ENCODE measurements at regions of chr18 and their contacts with region 1.

Region 1: DNA sequence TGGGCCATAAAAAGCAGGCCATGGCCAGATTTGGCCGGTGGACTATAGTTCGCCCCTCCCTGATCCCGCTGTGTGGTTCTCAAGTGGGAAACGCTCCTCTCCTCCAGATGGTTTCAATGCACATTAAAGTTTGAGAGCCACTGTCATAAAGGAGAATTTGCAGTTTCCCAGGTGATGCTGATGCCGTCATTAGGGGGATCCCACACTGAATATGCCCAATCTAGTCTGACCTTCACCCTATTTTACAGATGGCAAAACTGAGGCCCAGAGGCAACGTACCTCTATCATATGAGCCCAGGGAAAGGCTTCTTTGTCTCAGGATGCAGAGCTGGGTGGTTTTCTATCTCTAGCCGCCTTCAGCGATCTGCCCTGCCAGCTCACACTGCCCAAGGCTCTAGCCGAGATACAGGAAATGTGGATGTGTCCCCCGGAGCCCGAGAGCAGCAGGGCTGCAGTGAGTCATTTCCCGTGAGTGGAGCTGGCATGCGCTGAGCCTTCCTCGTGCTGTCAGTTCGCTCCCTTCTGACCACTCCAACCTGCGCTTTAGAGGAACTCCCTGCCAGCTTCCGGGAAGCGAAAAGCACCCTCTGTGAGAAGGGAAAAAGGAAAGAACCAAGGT is 116.2 kb downstream of the SMAD7 start:
- DNase-seq: peak; percentile 86
- H3K4me3 Mint-ChIP-seq: peak overlapping the region; percentile 65
- H3K27ac Mint-ChIP-seq: peak overlapping the region; percentile 85
- H3K4me1 Mint-ChIP-seq: peaks cover 54% of the 10 kb centered on the region
- H3K27me3 Mint-ChIP-seq: no peaks in the 10 kb centered on the region

Region 2: DNA sequence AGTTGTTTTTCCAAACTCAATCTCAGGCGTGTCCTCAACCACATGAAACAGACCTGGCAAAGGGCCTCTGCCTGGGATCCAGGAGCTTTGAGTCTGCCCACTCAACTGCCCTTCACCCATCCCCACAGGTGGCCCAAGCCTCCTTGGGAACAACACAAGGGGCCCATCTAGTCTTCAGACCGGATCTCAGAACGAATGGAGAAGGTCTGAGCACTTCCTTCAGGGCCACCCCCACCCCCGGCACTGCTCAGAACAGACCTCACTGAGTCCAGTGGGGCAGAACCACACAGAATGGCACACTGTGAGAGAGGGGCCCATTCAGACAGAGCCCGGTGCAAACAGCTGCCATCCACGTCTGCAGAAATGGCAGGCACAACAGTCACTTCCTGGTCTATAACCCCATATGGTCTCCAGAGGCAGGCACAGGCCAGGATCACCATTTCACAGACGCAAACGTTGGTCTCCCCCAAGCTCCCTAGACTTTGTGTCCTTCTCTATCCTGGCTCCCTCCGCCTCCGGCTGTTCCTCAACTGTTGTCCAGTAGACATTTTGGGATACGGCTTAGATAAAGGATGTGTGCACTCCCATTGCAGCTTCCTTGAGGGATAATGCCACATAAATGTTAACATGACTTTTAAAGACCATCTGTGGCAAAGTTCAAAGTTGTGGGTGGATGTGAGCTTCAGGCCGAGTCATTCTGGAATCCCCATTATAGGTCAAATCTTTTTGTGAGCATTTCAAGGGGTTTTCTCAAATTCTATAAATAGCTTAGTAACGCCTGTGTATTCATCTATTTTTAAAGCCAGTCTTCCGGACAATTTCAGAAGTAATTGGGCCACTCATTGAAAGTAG is 33.4 kb before region 1 on chr18:
- CTCF ChIA-PET with region 1: interaction called, 3 read pairs
- intact Hi-C with region 1: loop called (anchors 1 kb)
- DNase-seq: peak; percentile 37
- H3K4me3 Mint-ChIP-seq: no peak overlapping the region
- H3K27ac Mint-ChIP-seq: peak overlapping the region; percentile 57
- H3K4me1 Mint-ChIP-seq: peaks cover 45% of the 10 kb centered on the region
- H3K27me3 Mint-ChIP-seq: no peaks in the 10 kb centered on the region

Region 3: DNA sequence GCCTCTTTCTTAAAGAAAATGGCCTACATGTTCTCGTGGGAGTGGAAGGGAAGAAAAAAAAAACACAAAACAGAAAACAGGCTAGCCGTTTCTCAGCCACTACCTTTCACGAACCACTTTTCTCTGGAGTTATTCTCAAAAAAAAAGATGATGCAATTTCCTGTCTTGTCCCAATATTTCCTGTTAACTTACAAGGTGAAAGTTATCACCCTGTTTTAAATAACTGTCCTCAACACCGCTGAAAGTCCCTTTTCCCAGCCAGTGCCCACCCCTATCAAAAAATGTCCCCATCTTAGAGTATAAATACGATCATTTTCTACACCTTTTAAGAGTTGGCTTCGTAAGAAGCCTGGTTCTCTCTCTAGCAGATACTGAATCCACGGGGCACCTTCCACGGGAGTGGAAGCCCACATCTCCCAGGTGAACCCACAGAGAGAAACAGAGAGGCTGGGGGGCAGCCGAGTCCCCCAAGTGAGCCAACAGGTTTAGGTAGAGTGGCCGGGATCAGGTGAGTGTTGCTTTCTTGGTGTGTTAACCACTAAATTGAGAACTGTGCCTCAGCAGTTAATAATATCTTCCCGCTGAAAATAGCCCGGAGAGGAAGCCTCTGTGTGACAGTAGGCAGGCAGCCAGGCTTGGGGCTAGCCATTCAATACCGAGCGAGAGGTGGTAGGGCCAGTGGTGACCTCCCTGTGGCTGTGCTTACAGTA is 100.4 kb after region 1 on chr18:
- CTCF ChIA-PET with region 1: no interaction called
- intact Hi-C with region 1: loop called (anchors 1 kb)
- DNase-seq: peak; percentile 29
- H3K4me3 Mint-ChIP-seq: peak overlapping the region; percentile 49
- H3K27ac Mint-ChIP-seq: peak overlapping the region; percentile 95
- H3K4me1 Mint-ChIP-seq: peaks cover 82% of the 10 kb centered on the region
- H3K27me3 Mint-ChIP-seq: no peaks in the 10 kb centered on the region

Region 4: DNA sequence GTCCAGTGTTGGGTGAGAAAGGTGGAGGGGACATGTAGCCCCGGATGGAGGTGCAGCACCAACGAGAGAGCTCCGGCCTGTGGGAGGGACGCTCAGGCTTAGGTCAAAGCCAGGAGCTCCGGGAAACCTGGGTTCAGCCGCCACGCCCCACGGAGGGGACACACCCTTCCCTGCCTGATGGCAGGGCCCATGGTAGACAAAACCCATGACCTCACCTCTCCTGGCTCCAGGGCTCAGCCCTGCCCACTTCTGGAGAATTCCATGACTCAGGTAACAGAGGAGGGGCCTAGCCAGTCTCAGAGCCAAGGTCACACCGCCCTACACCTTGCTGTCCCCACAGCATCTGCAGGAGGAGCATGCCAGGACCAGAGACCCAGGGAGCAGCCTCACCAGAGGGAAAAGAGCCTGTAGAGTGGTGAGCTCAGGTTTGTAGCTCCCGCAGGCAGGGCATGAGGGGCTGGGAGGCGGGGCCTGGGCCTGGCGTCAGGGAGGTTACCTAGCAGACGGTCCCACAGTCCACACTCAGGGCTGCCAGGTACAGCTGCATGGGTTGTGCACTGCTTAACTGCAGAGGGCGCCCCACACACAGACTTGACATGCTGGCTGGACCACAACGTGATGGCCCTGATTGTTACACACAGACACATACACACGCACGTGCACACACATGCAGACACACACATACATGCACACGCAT is 187.1 kb after region 1 on chr18:
- CTCF ChIA-PET with region 1: no interaction called
- intact Hi-C with region 1: no loop called
- DNase-seq: peak; percentile 78
- H3K4me3 Mint-ChIP-seq: no peak overlapping the region
- H3K27ac Mint-ChIP-seq: no peak overlapping the region
- H3K4me1 Mint-ChIP-seq: no peaks in the 10 kb centered on the region
- H3K27me3 Mint-ChIP-seq: no peaks in the 10 kb centered on the region